ENCODE measurements at regions of chr3 and their contacts with region 1.

Region 1: DNA sequence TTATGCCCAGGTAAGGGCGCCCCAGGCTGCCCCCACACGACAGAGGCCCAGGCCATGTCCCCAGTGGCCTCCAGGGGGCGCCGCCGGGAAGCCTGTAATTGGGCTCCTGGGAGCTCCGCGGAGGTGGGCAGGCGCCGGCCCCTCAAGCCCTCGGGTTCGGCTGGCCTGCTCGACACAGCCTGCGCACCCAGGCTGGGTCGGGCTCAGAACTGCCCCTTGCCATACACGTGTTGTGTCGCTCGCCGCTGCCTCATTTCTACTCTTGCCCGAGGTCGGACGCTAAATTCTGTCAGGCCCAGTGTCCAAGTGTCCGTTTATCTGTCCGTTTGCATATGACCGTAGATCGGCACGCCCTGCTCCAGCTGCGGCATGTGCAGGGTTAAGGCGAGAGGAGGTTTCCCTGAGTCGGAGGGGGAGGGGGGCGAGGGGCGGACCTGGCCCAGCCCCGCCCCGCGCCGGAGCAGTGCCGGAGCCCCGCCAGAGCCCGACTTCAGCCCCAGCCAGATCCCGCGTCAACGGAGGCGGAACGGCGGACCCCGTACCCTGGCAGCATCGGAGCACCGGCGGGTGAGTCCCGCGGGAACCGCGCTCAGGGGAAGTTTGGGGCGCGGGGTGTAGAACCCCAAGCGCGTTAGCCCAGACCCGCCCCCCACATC is at the start of gene KLHDC8B:
- DNase-seq: peak; percentile 96
- H3K4me3 ChIP-seq: peak within 1 kb of the TSS; percentile 58 to 93 (median 70)
- H3K27ac ChIP-seq: peak within 1 kb of the TSS; percentile 85 to 95 (median 88)
- H3K4me1 ChIP-seq: peaks cover 0 to 60% (median 48%) of the 10 kb centered on the region in 4 donors
- H3K27me3 ChIP-seq: no peaks in the 10 kb centered on the region
- CTCF ChIP-seq: peak; percentile 94 to 98 (median 96)
- EP300 ChIP-seq: peak in 1 of 4 donors; percentile 9
- POLR2A ChIP-seq: peak; percentile 31 to 76
- total RNA-seq, gene KLHDC8B: 95.3 to 134 (median 98.0) TPM

Region 2: GRCh38 chr3:48997714-48998641 is 173.3 kb before region 1 on chr3:
- intact Hi-C with region 1: no loop called
- DNase-seq: no peak
- H3K4me3 ChIP-seq: no peak overlapping the region
- H3K27ac ChIP-seq: no peak overlapping the region
- H3K4me1 ChIP-seq: no peaks in the 10 kb centered on the region
- H3K27me3 ChIP-seq: no peaks in the 10 kb centered on the region
- CTCF ChIP-seq: no peak
- EP300 ChIP-seq: no peak
- POLR2A ChIP-seq: no peak

Region 3: DNA sequence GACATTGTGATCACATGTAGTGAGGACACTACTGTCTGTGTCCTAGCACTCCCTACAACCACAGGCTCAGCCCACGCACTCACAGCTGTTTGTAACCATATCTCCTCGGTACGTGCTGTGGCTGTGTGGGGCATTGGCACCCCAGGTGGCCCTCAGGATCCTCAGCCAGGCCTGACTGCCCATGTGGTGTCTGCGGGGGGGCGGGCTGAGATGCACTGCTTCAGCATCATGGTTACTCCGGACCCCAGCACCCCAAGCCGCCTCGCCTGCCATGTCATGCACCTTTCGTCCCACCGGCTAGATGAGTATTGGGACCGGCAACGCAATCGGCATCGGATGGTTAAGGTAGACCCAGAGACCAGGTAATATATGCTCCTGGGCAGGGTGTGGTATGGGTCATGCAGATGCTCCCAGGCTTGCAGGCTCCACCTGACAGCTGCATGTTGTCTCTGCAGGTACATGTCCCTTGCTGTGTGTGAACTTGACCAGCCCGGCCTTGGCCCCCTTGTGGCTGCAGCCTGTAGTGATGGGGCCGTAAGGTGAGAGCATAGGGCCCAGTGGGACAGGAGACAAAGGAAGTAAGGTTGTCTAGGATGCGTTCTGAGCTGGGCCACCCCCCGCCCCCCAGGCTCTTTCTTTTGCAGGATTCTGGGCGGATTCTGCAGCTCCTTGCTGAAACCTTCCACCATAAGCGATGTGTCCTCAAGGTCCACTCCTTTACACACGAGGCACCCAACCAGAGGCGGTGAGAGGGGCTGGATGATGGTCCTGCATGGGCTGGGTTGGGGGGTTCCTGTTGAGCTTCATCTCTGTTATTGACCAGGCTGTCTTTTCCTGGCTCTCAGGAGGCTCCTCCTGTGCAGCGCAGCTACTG is 157.3 kb before region 1 on chr3:
- intact Hi-C with region 1: no loop called
- DNase-seq: no peak
- H3K4me3 ChIP-seq: no peak overlapping the region
- H3K27ac ChIP-seq: no peak overlapping the region
- H3K4me1 ChIP-seq: peaks cover 0 to 40% (median 29%) of the 10 kb centered on the region in 4 donors
- H3K27me3 ChIP-seq: no peaks in the 10 kb centered on the region
- CTCF ChIP-seq: peak in 3 of 4 experiments; percentile 31 to 38 (median 33)
- EP300 ChIP-seq: no peak
- POLR2A ChIP-seq: no peak

Region 4: DNA sequence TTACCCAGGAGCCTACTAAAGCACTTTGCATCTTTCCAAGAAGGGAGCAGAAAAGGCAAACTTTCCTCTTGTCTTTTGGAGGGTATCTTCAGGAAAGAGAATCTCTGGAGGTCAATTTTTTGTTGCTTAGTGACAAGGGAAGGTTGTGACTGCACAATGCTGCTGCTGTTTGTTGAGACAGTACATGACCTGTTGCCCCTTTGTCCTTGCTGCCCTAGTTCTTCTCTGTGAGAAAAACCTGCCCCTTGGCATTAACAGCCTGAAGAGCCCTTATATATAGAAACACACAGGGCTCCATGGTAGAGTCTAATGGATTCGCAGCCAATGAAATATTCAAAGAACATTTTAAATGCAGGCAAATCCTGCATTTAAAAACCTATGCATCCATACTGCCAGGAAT is 20.5 kb after region 1 on chr3:
- intact Hi-C with region 1: no loop called
- DNase-seq: no peak
- H3K4me3 ChIP-seq: no peak overlapping the region
- H3K27ac ChIP-seq: no peak overlapping the region
- H3K4me1 ChIP-seq: no peaks in the 10 kb centered on the region
- H3K27me3 ChIP-seq: no peaks in the 10 kb centered on the region
- CTCF ChIP-seq: no peak
- EP300 ChIP-seq: no peak
- POLR2A ChIP-seq: no peak

Region 5: GRCh38 chr3:49217688-49218470 is 46.6 kb after region 1 on chr3:
- intact Hi-C with region 1: loop called (anchors 5 kb)
- DNase-seq: peak; percentile 81
- H3K4me3 ChIP-seq: no peak overlapping the region
- H3K27ac ChIP-seq: peak overlapping the region; percentile 77 to 85 (median 84)
- H3K4me1 ChIP-seq: peaks cover 4 to 31% (median 24%) of the 10 kb centered on the region in 4 donors
- H3K27me3 ChIP-seq: no peaks in the 10 kb centered on the region
- CTCF ChIP-seq: no peak
- EP300 ChIP-seq: no peak
- POLR2A ChIP-seq: no peak

Region 6: GRCh38 chr3:49295489-49296058 is 124.3 kb after region 1 on chr3:
- intact Hi-C with region 1: loop called (anchors 5 kb)
- DNase-seq: no peak
- H3K4me3 ChIP-seq: no peak overlapping the region
- H3K27ac ChIP-seq: peak overlapping the region in 2 of 4 donors; percentile 76 to 80
- H3K4me1 ChIP-seq: peaks cover 0 to 22% (median 15%) of the 10 kb centered on the region in 4 donors
- H3K27me3 ChIP-seq: no peaks in the 10 kb centered on the region
- CTCF ChIP-seq: peak in 3 of 4 experiments; percentile 36 to 64 (median 55)
- EP300 ChIP-seq: no peak
- POLR2A ChIP-seq: no peak

Region 7: GRCh38 chr3:49358217-49358883 is 187.1 kb after region 1 on chr3 and contains the start of gene GPX1:
- intact Hi-C with region 1: loop called (anchors 5 kb)
- DNase-seq: peak; percentile 98
- H3K4me3 ChIP-seq: peak within 1 kb of the TSS; percentile 68 to 83 (median 76)
- H3K27ac ChIP-seq: peak within 1 kb of the TSS; percentile 89 to 95 (median 94)
- H3K4me1 ChIP-seq: peaks cover 0 to 34% (median 26%) of the 10 kb centered on the region in 4 donors
- H3K27me3 ChIP-seq: no peaks in the 10 kb centered on the region
- CTCF ChIP-seq: no peak
- EP300 ChIP-seq: peak in 1 of 4 donors; percentile 37
- POLR2A ChIP-seq: peak; percentile 90
- total RNA-seq, gene GPX1: 164 to 331 (median 268) TPM

Measured in sigmoid colon (tissue), 7 donors.